CD4-positive, alpha-beta T cell (primary cell): ENCODE measurements at regions of chr4 and their contacts with region 1.

Region 1: GRCh38 chr4:2792711-2793585 is at the start of gene SH3BP2:
- DNase-seq: peak in 12 of 14 experiments; percentile 36 to 81 (median 58)
- ATAC-seq: peak; percentile 43
- H3K4me3 ChIP-seq: peak within 1 kb of the TSS; percentile 65
- H3K4me3 Mint-ChIP-seq: peak within 1 kb of the TSS; percentile 84
- H3K27ac ChIP-seq: peak within 1 kb of the TSS in 1 of 2 donors; percentile 21
- H3K27ac Mint-ChIP-seq: peak within 1 kb of the TSS; percentile 75
- H3K4me1 ChIP-seq: peaks cover 83% of the 10 kb centered on the region
- H3K4me1 Mint-ChIP-seq: peaks cover 44% of the 10 kb centered on the region
- H3K27me3 ChIP-seq: no peaks in the 10 kb centered on the region
- H3K27me3 Mint-ChIP-seq: no peaks in the 10 kb centered on the region
- CTCF ChIP-seq: no peak
- total RNA-seq, gene SH3BP2: 30.1 to 30.5 TPM

Region 2: GRCh38 chr4:1887052-1887451 is 905.9 kb before region 1 on chr4:
- CTCF ChIA-PET with region 1: no interaction called
- POLR2A ChIA-PET with region 1: no interaction called
- intact Hi-C with region 1: no loop called
- DNase-seq: no peak
- ATAC-seq: no peak
- H3K4me3 ChIP-seq: no peak overlapping the region
- H3K4me3 Mint-ChIP-seq: no peak overlapping the region
- H3K27ac ChIP-seq: no peak overlapping the region
- H3K27ac Mint-ChIP-seq: no peak overlapping the region
- H3K4me1 ChIP-seq: peaks cover 2% of the 10 kb centered on the region
- H3K4me1 Mint-ChIP-seq: peaks cover 20% of the 10 kb centered on the region
- H3K27me3 ChIP-seq: no peaks in the 10 kb centered on the region
- H3K27me3 Mint-ChIP-seq: no peaks in the 10 kb centered on the region
- CTCF ChIP-seq: no peak

Region 3: GRCh38 chr4:2843263-2843940 is 50.5 kb after region 1 on chr4 and contains the start of gene ADD1:
- CTCF ChIA-PET with region 1: no interaction called
- POLR2A ChIA-PET with region 1: interaction called, 8 read pairs
- intact Hi-C with region 1: loop called (anchors 5 to 10 kb)
- DNase-seq: peak; percentile 82 to 100 (median 92)
- ATAC-seq: peak; percentile 93
- H3K4me3 ChIP-seq: peak within 1 kb of the TSS; percentile 97
- H3K4me3 Mint-ChIP-seq: peak within 1 kb of the TSS; percentile 98
- H3K27ac ChIP-seq: peak within 1 kb of the TSS; percentile 66 to 85
- H3K27ac Mint-ChIP-seq: peak within 1 kb of the TSS; percentile 92
- H3K4me1 ChIP-seq: peaks cover 49% of the 10 kb centered on the region
- H3K4me1 Mint-ChIP-seq: peaks cover 63% of the 10 kb centered on the region
- H3K27me3 ChIP-seq: no peaks in the 10 kb centered on the region
- H3K27me3 Mint-ChIP-seq: no peaks in the 10 kb centered on the region
- CTCF ChIP-seq: no peak
- total RNA-seq, gene ADD1: 153 TPM

Region 4: DNA sequence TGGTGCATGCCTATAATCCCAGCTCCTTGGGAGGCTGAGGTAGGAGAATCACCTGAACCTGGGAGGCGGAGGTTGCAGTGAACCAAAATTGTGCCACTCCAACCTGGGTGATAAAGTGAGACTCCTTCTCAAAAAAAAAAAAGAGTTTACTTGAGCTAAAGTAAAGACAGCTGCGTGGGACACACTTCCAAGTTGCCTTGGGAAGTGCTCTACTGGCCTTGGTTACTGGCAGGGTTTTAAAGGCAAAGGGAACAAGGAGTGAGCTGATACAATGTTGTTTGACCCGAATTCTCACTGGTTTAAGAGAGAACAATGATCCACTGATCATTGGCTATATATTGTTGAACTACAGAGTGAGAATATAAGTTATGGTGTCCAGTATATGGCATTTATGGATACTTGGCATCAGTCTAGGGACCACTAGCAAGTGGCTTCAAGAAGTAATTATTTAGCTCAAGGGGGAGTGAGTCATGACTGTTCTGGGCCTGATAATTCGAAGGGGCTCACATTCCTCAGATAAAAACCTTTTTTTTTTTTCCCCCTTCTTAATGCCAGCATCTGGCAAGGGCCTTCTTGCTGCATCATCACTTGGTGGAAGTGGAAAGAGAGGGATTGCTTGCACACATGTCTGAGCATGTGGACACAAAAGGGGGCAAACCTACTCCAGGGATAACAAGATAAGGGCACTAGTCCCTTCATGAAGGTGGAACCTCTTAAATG is 202.8 kb after region 1 on chr4:
- CTCF ChIA-PET with region 1: no interaction called
- POLR2A ChIA-PET with region 1: no interaction called
- intact Hi-C with region 1: no loop called
- DNase-seq: no peak
- ATAC-seq: no peak
- H3K4me3 ChIP-seq: no peak overlapping the region
- H3K4me3 Mint-ChIP-seq: no peak overlapping the region
- H3K27ac ChIP-seq: no peak overlapping the region
- H3K27ac Mint-ChIP-seq: no peak overlapping the region
- H3K4me1 ChIP-seq: no peaks in the 10 kb centered on the region
- H3K4me1 Mint-ChIP-seq: no peaks in the 10 kb centered on the region
- H3K27me3 ChIP-seq: no peaks in the 10 kb centered on the region
- H3K27me3 Mint-ChIP-seq: no peaks in the 10 kb centered on the region
- CTCF ChIP-seq: no peak